Psoas muscle (tissue), 8 donors: ENCODE measurements at regions of chr3 and their contacts with region 1.

Region 1: DNA sequence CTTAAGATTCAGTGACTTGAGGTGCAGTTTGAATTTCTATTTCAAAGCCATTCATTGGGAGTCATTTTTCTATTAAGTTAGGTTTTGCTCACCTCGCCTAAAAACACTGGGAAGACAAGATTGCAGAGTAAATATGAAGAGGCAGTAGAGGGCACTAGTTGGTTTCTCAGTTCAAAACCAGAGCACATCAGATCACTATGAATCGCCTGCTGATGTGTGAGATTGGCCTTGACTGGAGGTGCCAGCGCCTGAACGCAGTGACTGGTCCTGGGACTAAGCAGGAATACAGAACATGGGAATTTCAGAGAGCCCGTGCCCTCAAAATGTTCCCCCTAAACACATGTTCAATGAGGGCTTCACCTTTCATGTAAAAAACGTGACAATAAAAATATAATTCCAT is 229.0 kb downstream of the ITPR1 start:
- DNase-seq: peak; percentile 51 to 72
- ATAC-seq: peak; percentile 80 to 90 (median 84)
- H3K4me3 ChIP-seq: no peak overlapping the region
- H3K27ac ChIP-seq: peak overlapping the region; percentile 42
- H3K4me1 ChIP-seq: peaks cover 48% of the 10 kb centered on the region
- H3K27me3 ChIP-seq: no peaks in the 10 kb centered on the region
- CTCF ChIP-seq: peak; percentile 51

Region 2: GRCh38 chr3:4776980-4777581 is 55.0 kb after region 1 on chr3:
- intact Hi-C with region 1: loop called in 1 of 2 experiments (anchors 5 kb)
- DNase-seq: no peak
- ATAC-seq: peak; percentile 41 to 64 (median 53)
- H3K4me3 ChIP-seq: no peak overlapping the region
- H3K27ac ChIP-seq: peak overlapping the region; percentile 21
- H3K4me1 ChIP-seq: peaks cover 24% of the 10 kb centered on the region
- H3K27me3 ChIP-seq: no peaks in the 10 kb centered on the region
- CTCF ChIP-seq: no peak

Region 3: GRCh38 chr3:4807381-4808280 is 85.5 kb after region 1 on chr3:
- intact Hi-C with region 1: loop called in 1 of 2 experiments (anchors 5 kb)
- DNase-seq: peak; percentile 31 to 70
- ATAC-seq: peak; percentile 92 to 93 (median 92)
- H3K4me3 ChIP-seq: no peak overlapping the region
- H3K27ac ChIP-seq: peak overlapping the region; percentile 80
- H3K4me1 ChIP-seq: peaks cover 18% of the 10 kb centered on the region
- H3K27me3 ChIP-seq: no peaks in the 10 kb centered on the region
- CTCF ChIP-seq: peak; percentile 32

Region 4: GRCh38 chr3:4978204-4978965 is 256.3 kb after region 1 on chr3:
- intact Hi-C with region 1: loop called (anchors 2 to 5 kb)
- DNase-seq: peak; percentile 98
- ATAC-seq: peak; percentile 63 to 75 (median 70)
- H3K4me3 ChIP-seq: peak overlapping the region; percentile 99
- H3K27ac ChIP-seq: peak overlapping the region; percentile 100
- H3K4me1 ChIP-seq: peaks cover 17% of the 10 kb centered on the region
- H3K27me3 ChIP-seq: no peaks in the 10 kb centered on the region
- CTCF ChIP-seq: no peak